ENCODE measurements at regions of chr17 and their contacts with region 1.

Region 1: GRCh38 chr17:38848557-38848891 is 5.0 kb downstream of the RPL23 start:
- DNase-seq: no peak
- ATAC-seq: no peak
- H3K4me3 Mint-ChIP-seq: peak overlapping the region; percentile 42
- H3K27ac Mint-ChIP-seq: peak overlapping the region; percentile 30
- H3K4me1 Mint-ChIP-seq: peaks cover 32% of the 10 kb centered on the region
- H3K27me3 Mint-ChIP-seq: no peaks in the 10 kb centered on the region
- CTCF ChIP-seq: no peak

Region 2: DNA sequence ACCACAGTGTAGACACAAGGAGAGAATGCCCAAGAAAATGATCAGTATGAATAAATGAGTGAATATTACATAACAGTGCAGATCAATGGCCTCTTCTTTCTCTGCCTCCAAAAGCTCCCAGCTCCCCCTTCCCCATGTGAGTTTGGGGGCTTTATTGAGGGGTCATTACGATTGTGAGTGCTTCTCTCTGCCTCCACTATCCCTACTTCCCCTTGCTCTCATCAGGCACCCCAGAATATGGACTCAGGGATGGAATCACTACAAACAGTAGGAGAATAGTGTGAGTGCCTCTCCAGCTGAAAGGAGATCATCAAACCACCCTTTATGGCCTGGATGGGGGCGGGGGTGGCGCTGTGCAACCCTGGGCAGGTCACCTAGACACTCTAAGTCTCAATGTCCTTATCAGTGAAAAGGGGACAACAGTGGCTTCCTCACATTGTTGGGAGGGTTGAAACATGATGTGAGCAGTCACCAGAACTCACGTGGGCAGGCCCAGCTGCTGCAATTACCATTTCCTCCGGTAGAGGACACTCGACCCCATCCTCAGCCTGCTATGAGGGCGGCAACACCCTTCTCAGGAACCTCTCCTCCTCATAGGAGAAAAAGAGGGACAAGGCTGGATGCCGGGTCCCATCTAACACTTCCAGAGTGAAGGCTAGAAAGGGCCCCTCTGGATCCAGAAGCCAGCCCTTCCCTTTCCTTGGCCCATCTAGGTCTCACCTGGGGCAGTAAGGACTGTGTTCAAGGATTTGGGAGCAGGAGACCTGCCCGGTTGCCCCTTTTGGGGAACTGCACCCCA is 171.6 kb before region 1 on chr17:
- CTCF ChIA-PET with region 1: no interaction called
- POLR2A ChIA-PET with region 1: no interaction called
- intact Hi-C with region 1: no loop called
- DNase-seq: peak; percentile 92
- ATAC-seq: peak; percentile 63
- H3K4me3 Mint-ChIP-seq: no peak overlapping the region
- H3K27ac Mint-ChIP-seq: peak overlapping the region; percentile 75
- H3K4me1 Mint-ChIP-seq: peaks cover 34% of the 10 kb centered on the region
- H3K27me3 Mint-ChIP-seq: peaks cover 4% of the 10 kb centered on the region
- CTCF ChIP-seq: peak; percentile 99

Region 3: GRCh38 chr17:38824899-38825761 is 23.4 kb before region 1 on chr17 and contains the start of gene CWC25:
- CTCF ChIA-PET with region 1: interaction called, 3 read pairs
- POLR2A ChIA-PET with region 1: interaction called, 48 read pairs
- intact Hi-C with region 1: no loop called
- DNase-seq: peak; percentile 95
- ATAC-seq: peak; percentile 85
- H3K4me3 Mint-ChIP-seq: peak within 1 kb of the TSS; percentile 93
- H3K27ac Mint-ChIP-seq: peak within 1 kb of the TSS; percentile 100
- H3K4me1 Mint-ChIP-seq: peaks cover 32% of the 10 kb centered on the region
- H3K27me3 Mint-ChIP-seq: no peaks in the 10 kb centered on the region
- CTCF ChIP-seq: no peak
- total RNA-seq, gene CWC25: 19.7 to 20.1 TPM

Region 4: DNA sequence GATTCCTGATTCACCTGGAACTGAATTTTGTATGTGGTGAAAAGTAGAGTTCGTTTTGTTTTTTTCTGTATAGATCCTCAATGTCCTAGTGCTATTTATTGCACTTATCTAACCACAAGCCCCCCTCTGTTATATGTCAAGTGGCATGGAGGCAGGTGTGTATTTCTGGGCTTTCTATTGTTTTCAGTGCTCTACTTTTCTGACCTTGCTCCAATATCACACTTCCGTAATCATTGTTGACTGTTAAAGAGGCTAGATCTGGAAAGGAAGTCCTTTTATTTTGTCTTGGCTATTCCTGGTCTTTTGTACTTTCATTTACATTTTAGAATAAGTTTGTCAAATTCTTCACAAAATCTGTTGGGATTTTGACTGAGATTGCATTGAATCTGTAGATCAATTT is 145.5 kb after region 1 on chr17:
- CTCF ChIA-PET with region 1: no interaction called
- POLR2A ChIA-PET with region 1: no interaction called
- intact Hi-C with region 1: no loop called
- DNase-seq: no peak
- ATAC-seq: no peak
- H3K4me3 Mint-ChIP-seq: no peak overlapping the region
- H3K27ac Mint-ChIP-seq: no peak overlapping the region
- H3K4me1 Mint-ChIP-seq: no peaks in the 10 kb centered on the region
- H3K27me3 Mint-ChIP-seq: no peaks in the 10 kb centered on the region
- CTCF ChIP-seq: no peak

Measured in activated CD8-positive, alpha-beta T cell treated with anti-CD3 and anti-CD28 coated beads for 36 hours (primary cell).